ENCODE measurements at regions of chr17 and their contacts with region 1.

Region 1: GRCh38 chr17:20009302-20010098 is at the start of gene SPECC1:
- DNase-seq: peak; percentile 95
- ATAC-seq: peak; percentile 90
- H3K4me3 Mint-ChIP-seq: peak within 1 kb of the TSS; percentile 92
- H3K27ac Mint-ChIP-seq: no peak within 1 kb of the TSS
- H3K4me1 Mint-ChIP-seq: peaks cover 15% of the 10 kb centered on the region
- H3K27me3 Mint-ChIP-seq: peaks cover 44% of the 10 kb centered on the region
- CTCF ChIP-seq: no peak; the same call in none of the 2 replicates
- total RNA-seq, gene SPECC1: 91.9 to 103 TPM (median 93.4 TPM) in 3 replicates

Region 2: GRCh38 chr17:19977311-19978208 is 31.9 kb before region 1 on chr17 and contains the start of gene AKAP10:
- CTCF ChIA-PET with region 1: interaction called, 10 read pairs
- POLR2A ChIA-PET with region 1: interaction called, 3 read pairs
- DNase-seq: peak; percentile 94
- ATAC-seq: peak; percentile 70
- H3K4me3 Mint-ChIP-seq: peak within 1 kb of the TSS; percentile 92
- H3K27ac Mint-ChIP-seq: peak within 1 kb of the TSS; percentile 97
- H3K4me1 Mint-ChIP-seq: peaks cover 31% of the 10 kb centered on the region
- H3K27me3 Mint-ChIP-seq: peaks cover 3% of the 10 kb centered on the region; the same call in 1 of the 2 replicates
- CTCF ChIP-seq: no peak
- total RNA-seq, gene AKAP10: 29.9 to 33.6 TPM (median 33.2 TPM) in 3 replicates

Region 3: DNA sequence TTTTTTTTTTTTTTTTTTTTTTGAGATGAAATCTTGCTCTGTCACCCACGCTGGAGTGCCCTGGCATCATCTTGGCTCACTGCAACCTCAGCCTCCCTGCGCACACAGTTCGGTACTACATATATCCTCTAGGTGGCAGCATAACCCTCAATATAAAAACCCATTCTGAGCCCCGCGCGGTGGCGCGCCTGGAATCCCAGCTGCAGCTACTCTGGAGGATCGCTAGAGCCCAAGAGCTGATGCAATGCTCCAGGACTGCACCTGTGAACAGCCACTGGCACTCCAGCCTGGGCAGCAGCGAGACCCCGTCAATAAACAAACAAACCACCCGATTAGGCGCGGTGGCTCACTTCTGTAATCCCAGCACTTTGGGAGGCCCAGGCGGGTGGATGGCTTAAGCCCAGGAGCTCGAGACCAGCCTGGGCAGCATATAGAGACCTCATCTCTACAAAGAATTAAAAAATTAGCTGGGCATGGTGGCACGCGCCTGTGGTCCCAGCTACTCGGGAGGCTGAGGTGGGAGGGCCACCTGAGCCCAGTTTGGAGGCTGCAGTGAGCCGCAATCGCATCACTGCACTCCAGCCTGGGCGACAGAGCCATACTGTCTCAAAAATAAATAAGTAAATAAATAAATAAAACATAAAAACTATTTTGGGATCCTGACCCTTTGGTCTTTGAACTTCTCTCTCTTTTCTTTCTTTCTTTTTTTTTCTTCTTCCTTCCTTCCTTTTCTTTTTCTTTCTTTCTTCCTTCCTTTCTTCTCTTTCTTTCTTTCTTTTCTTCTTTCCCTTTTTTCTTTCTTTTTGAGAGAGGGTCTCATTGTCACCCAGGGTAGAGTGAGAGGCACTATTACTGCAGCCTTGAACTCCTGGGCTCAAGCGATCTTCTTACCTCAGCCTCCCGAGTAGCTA is 16.4 kb before region 1 on chr17:
- CTCF ChIA-PET with region 1: interaction called, 52 read pairs
- POLR2A ChIA-PET with region 1: no interaction called
- DNase-seq: peak; percentile 93
- ATAC-seq: peak; percentile 98
- H3K4me3 Mint-ChIP-seq: peak overlapping the region; percentile 39
- H3K27ac Mint-ChIP-seq: peak overlapping the region; percentile 59; the same call in 1 of the 2 replicates
- H3K4me1 Mint-ChIP-seq: peaks cover 4% of the 10 kb centered on the region
- H3K27me3 Mint-ChIP-seq: no peaks in the 10 kb centered on the region
- CTCF ChIP-seq: peak; percentile 72

Region 4: GRCh38 chr17:20089756-20090547 is 80.5 kb after region 1 on chr17:
- CTCF ChIA-PET with region 1: interaction called, 17 read pairs
- POLR2A ChIA-PET with region 1: no interaction called
- DNase-seq: no peak
- ATAC-seq: no peak
- H3K4me3 Mint-ChIP-seq: no peak overlapping the region
- H3K27ac Mint-ChIP-seq: no peak overlapping the region
- H3K4me1 Mint-ChIP-seq: peaks cover 53% of the 10 kb centered on the region
- H3K27me3 Mint-ChIP-seq: no peaks in the 10 kb centered on the region; the same call in 1 of the 2 replicates
- CTCF ChIP-seq: no peak

Region 5: DNA sequence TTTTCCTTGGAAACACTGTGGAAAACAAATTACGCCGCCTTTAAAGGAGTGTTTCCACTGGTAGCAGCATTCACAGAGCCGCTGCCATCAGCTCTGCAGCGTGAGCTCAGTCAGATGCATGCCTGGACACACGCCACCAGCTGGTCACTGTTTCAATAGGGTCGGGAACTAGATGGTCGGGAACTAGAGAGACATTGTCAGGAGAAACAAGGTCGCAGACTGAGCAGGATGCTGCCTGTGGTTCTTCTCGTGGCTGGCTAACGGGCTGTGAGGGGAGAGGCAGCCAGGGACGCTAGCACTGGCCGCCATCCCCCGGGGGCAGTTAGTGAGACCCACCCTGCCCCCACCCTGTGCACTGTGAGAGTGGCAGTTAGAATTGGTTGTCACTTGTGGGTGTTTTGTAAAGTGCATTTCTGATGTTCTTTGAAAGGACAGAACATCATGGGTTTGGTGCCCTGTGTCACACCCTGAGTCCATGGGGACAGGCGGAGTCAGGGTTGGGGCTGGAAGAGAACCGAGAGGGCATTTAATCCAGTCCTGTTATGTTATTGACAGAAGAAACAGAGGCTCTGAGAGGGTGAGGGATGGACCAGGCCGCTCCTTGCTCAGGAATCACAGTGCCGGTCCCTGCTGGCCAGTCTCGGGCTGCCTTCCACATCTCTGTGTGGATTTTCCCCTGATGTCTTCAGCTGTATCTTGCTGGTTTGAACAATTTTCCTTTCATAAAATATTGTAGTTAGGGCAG is 86.0 kb after region 1 on chr17:
- CTCF ChIA-PET with region 1: interaction called, 17 read pairs
- POLR2A ChIA-PET with region 1: no interaction called
- DNase-seq: peak; percentile 54
- ATAC-seq: peak; percentile 87
- H3K4me3 Mint-ChIP-seq: no peak overlapping the region
- H3K27ac Mint-ChIP-seq: no peak overlapping the region
- H3K4me1 Mint-ChIP-seq: peaks cover 49% of the 10 kb centered on the region
- H3K27me3 Mint-ChIP-seq: no peaks in the 10 kb centered on the region; the same call in 1 of the 2 replicates
- CTCF ChIP-seq: no peak

Region 6: GRCh38 chr17:20105539-20106280 is 96.2 kb after region 1 on chr17:
- CTCF ChIA-PET with region 1: interaction called, 11 read pairs
- POLR2A ChIA-PET with region 1: interaction called, 7 read pairs
- DNase-seq: no peak
- ATAC-seq: peak; percentile 47
- H3K4me3 Mint-ChIP-seq: no peak overlapping the region
- H3K27ac Mint-ChIP-seq: no peak overlapping the region
- H3K4me1 Mint-ChIP-seq: 0 out of 2 replicates have a peak, but pooled peaks cover 3% of the 10 kb centered on the region
- H3K27me3 Mint-ChIP-seq: no peaks in the 10 kb centered on the region
- CTCF ChIP-seq: no peak